CD8-positive, alpha-beta memory T cell (primary cell): ENCODE measurements at regions of chr7 and their contacts with region 1.

Region 1: DNA sequence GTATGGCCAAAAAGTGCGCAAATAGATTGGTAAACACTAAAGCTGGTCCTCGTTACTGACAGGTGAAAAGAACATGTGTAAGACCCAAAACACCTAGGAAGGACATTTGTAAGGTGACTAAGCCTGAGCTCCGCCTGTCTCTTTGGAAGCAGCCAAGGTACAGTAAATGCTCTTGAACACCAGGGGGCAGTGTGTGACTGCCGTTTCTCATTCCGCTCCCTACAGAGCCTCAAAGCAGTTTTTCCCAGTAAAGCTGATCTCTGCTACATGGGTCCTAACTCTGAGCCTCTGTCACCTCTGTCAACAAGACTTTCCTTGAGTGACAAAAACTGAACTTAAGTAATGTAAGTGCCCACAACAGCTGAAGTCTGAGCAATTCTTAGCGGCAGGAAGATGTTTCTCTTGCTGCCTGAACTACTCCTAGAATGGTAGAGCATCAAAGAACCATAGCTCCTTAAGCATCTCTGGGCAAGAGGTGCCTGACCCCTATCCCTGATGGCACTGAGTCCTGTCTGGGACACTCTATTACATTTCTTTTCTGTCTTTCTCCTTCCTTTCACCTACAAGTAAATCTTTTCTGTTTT is 238.0 kb upstream of the INHBA start:
- DNase-seq: peak; percentile 10 to 52 (median 28)
- H3K4me3 ChIP-seq: no peak overlapping the region
- H3K4me3 Mint-ChIP-seq: no peak overlapping the region
- H3K27ac ChIP-seq: no peak overlapping the region
- H3K27ac Mint-ChIP-seq: no peak overlapping the region
- H3K4me1 ChIP-seq: peaks cover 7% of the 10 kb centered on the region
- H3K4me1 Mint-ChIP-seq: peaks cover 6 to 11% (median 10%) of the 10 kb centered on the region in 3 donors
- H3K27me3 ChIP-seq: no peaks in the 10 kb centered on the region
- H3K27me3 Mint-ChIP-seq: peaks cover 5 to 20% of the 10 kb centered on the region in 2 donors

Region 2: DNA sequence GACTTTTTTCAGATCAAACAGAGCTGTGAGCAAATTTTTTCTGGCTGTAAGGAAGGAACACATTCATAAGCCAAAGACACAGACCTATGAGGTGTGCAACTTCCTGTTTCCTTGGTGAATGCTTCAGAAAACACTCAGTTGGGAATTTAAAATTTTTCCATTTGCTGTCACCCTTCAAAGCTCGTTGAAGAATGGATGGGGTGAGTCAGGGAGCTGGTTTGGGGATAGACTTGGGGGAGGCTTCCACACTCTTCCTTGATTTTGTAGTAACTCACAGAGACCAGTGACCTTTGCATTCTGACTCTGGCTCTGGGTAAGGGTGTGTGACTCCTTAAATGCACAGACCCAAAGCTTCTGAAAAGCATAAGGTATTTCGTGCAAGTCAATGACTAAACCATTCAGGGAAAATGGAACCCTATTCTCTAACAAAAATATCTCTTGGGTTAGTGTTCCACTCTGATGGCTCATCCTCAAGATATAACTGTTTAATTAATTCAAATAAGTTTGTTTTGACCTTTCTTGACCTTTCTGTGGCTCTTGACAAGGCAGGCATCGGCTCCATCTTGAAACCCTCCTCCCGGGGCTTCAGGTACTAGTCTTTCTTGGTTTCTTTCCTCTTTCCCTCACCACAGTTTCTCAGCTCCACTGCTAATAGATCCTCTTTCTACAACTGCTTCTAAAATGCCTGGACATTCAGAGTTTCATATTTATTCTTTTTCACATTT is 10.2 kb before region 1 on chr7:
- CTCF ChIA-PET with region 1: interaction called, 16 read pairs
- POLR2A ChIA-PET with region 1: no interaction called
- DNase-seq: no peak
- H3K4me3 ChIP-seq: no peak overlapping the region
- H3K4me3 Mint-ChIP-seq: no peak overlapping the region
- H3K27ac ChIP-seq: no peak overlapping the region
- H3K27ac Mint-ChIP-seq: no peak overlapping the region
- H3K4me1 ChIP-seq: no peaks in the 10 kb centered on the region
- H3K4me1 Mint-ChIP-seq: no peaks in the 10 kb centered on the region
- H3K27me3 ChIP-seq: no peaks in the 10 kb centered on the region
- H3K27me3 Mint-ChIP-seq: peaks cover 10 to 21% of the 10 kb centered on the region in 2 donors

Region 3: DNA sequence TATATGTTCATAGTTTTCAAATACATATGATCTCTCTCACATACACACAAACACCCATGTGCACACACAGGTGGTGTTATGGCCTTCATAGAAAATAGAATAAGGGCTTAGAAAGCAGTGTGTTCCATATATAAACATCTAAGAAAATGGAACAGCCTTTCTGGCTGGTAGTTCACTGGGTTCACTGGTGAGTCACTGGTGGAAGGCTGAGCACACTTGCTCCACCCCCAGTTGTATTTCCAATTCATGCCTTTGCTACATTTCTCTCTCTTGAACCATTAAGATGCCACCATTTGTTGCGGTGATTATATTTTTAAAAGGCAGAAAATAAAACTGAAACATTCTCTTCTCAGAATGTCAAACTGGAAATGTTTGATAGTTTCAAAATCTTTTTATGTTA is 44.0 kb after region 1 on chr7:
- CTCF ChIA-PET with region 1: no interaction called
- POLR2A ChIA-PET with region 1: no interaction called
- DNase-seq: no peak
- H3K4me3 ChIP-seq: no peak overlapping the region
- H3K4me3 Mint-ChIP-seq: no peak overlapping the region
- H3K27ac ChIP-seq: no peak overlapping the region
- H3K27ac Mint-ChIP-seq: no peak overlapping the region
- H3K4me1 ChIP-seq: no peaks in the 10 kb centered on the region
- H3K4me1 Mint-ChIP-seq: no peaks in the 10 kb centered on the region
- H3K27me3 ChIP-seq: no peaks in the 10 kb centered on the region
- H3K27me3 Mint-ChIP-seq: peaks cover under 1 to 5% of the 10 kb centered on the region in 2 donors